HEK293T (cell line): ENCODE measurements at regions of chr12 and their contacts with region 1.

Region 1: GRCh38 chr12:77010691-77011548 is 54.4 kb downstream of the E2F7 start:
- DNase-seq: peak; percentile 79

Region 2: DNA sequence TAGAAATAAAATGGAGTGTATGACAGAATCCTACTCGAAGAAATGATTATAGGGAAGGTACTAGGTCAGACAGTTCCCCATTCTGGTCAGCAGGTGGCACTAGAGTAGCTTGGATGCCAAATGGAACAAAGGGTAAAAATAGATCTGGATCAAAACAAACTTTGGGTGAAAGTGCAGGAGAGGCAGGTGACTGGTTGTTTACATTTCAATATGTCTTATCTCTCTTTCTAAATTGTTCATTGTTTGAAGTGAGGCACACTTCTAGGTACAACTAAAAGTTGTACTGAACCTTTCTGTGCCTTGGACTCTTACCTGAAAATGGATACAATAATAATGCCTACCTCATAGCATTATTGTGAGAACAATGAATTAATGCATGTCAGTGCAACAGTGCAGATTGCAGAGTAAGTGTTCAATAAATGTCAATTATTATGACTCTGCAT is 389.3 kb before region 1 on chr12:
- CTCF ChIA-PET with region 1: interaction called, 11 read pairs
- POLR2A ChIA-PET with region 1: no interaction called
- DNase-seq: peak; percentile 66

Region 3: DNA sequence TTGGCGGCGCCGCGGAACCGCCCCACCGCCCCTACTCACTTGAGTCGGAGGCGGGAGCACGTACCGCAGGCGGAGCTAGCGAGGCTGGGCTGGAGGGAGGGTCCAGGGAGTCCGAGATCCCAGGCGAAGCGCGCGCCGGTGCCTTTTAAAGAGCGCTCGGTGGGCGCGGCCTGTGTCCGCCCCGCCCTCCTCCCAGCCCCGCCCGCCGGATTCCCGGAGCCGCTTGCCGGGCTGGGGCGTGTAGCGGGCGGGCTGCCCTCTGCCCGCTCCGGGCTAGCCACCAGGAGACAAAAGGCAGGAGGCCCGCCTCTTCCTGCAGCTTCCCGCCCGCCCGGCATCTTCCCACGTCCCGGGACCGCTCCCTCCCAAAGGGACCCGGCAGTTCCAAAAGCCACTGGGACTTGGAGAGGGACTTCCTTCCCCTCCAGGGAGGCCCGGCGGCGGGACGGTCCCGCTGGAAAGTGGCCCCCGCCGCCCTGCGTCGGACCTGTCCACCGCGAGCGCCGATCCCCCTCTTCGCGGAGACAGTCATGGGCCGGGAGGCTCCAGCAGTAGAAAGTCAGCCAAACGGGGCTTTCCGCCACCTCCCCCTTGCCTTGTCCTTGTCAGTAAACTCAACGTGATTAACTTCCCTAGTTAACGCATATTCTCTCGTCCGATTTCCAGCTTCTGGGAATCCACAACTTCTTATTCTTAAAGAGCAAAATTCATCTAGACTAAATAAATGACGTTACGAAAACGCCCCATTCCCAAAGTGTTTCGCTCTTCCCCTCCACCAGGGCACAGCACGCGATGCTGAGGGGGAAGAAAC is 131.8 kb before region 1 on chr12 and contains the start of gene CSRP2:
- CTCF ChIA-PET with region 1: interaction called, 5 read pairs
- POLR2A ChIA-PET with region 1: interaction called, 12 read pairs
- DNase-seq: peak; percentile 89